K562 (cell line): ENCODE measurements at regions of chr3 and their contacts with region 1.

Region 1: DNA sequence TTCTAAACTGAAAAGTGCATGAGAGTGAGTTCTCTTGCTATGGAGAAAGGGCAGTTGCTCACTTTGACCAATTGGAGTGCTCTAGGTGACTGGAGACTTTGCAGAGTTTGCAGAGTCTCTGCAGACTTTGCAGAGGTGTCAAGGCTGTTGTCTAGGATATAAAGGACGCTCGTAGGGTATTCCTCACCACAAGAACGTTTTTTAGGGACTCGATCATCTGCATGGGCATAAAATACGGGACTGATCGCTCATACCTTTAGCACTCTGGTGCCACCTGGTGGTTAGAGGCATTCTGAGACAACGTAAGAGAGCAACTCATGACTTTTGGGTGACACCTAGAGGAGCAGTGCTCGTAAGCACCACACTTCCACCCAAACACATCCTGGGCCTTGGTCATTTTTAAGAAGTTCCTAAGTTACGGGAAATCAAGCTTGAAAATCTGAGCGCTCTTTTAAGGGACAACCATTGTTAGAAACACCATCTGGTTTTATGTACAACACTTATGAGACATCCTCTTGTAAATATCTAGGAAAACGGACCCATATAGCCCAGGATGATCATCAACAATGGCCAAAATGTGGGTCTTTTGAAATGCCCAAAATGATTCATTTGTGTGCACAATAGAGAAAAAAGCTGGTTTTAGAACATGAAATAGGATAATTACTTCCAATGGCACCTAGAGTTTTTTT is 51.6 kb upstream of the XCR1 start:
- DNase-seq: peak; percentile 86 to 94 (median 88)
- ATAC-seq: peak; percentile 100
- H3K4me3 ChIP-seq: no peak overlapping the region
- H3K27ac ChIP-seq: no peak overlapping the region
- H3K4me1 ChIP-seq: no peaks in the 10 kb centered on the region; a peak in 1 of 5 replicates
- H3K27me3 ChIP-seq: peaks cover 0 to 3% of the 10 kb centered on the region in 2 experiments; a peak in 2 of 5 replicates
- CTCF ChIP-seq: peak; percentile 100
- EP300 ChIP-seq: no peak
- POLR2A ChIP-seq: no peak
- RAD21 ChIP-seq: peak; percentile 100

Region 2: DNA sequence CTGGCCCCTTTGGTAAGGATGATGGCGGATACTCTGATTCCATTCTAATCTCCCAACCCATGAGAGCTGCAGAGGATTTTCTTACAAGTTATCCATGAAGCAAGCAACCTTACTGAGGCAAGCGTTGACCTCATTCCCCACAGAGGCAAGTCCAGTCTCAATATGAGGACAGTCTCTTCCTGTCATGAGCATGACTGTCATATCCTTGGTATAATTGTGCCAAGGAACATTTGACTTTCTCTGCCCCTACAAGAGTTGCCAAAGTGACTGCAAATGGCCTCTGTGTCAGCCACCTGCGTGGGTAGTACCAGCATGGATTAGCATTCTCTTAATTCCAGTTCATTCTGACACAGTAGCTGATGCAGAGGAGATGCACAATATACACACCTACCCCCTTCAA is 781.5 kb before region 1 on chr3:
- CTCF ChIA-PET with region 1: no interaction called
- POLR2A ChIA-PET with region 1: no interaction called
- in situ Hi-C with region 1: no loop called
- intact Hi-C with region 1: no loop called
- DNase-seq: no peak
- ATAC-seq: no peak
- H3K4me3 ChIP-seq: no peak overlapping the region
- H3K27ac ChIP-seq: no peak overlapping the region
- H3K4me1 ChIP-seq: no peaks in the 10 kb centered on the region
- H3K27me3 ChIP-seq: peaks cover 19 to 25% of the 10 kb centered on the region in 2 experiments
- CTCF ChIP-seq: no peak
- EP300 ChIP-seq: no peak
- POLR2A ChIP-seq: no peak
- RAD21 ChIP-seq: no peak

Region 3: DNA sequence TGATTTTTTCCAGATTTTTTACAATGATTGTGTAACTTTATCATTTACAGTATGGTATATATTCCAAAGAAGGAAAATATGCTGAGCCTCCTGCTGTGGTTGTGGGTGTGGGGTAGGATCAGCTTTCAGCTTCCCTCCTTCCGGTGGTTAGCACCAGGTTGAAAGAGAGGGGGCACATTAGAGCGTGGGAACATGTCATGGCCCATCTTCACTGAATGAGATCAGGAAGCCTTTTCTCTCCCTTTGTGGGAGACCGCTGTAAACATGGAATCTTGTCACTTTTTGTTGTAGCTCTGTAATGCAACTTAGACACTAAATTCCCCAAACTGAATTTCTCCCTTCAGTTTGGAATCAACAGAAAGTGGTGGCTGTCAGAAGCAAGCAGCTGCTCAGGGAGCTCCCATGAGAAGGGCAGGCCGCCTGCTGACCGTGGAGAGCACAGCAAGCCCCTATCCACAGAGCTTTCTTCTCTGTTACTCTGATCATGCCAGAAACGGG is 571.0 kb before region 1 on chr3:
- CTCF ChIA-PET with region 1: interaction called, 21 read pairs
- POLR2A ChIA-PET with region 1: no interaction called
- in situ Hi-C with region 1: loop called (anchors 10 kb)
- intact Hi-C with region 1: loop called (anchors 10 kb)
- DNase-seq: peak in 3 of 4 experiments; percentile 39 to 59 (median 55)
- ATAC-seq: peak; percentile 89
- H3K4me3 ChIP-seq: no peak overlapping the region
- H3K27ac ChIP-seq: no peak overlapping the region
- H3K4me1 ChIP-seq: 0 out of 5 replicates have a peak, but pooled peaks cover 0 to 6% of the 10 kb centered on the region in 2 experiments
- H3K27me3 ChIP-seq: no peaks in the 10 kb centered on the region
- CTCF ChIP-seq: peak; percentile 59 to 70 (median 62)
- EP300 ChIP-seq: no peak
- POLR2A ChIP-seq: no peak
- RAD21 ChIP-seq: peak; percentile 67 to 80

Region 4: DNA sequence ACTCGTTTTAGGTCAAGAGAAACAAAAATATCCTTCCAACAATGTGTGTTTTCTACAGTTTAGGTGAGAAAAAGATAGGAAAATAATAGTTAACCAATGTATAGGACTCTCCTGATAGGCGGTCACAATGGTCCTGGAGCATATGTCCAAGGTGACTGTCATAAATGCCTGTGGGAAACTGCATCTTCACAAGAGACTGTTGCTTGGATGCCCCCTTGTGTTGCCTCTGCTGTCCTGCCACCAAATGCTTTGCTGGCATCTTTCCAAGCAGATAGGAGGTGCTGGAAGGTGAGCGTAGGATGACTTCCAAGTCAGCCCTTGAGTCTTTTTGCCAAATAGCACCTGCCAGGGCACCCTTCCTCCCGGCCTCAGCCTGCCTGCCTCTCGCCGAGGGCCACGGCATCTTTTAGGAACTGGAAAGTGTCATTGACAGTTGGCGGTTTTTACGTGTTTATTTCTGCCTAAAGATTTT is 413.7 kb before region 1 on chr3:
- CTCF ChIA-PET with region 1: no interaction called
- POLR2A ChIA-PET with region 1: no interaction called
- in situ Hi-C with region 1: no loop called
- intact Hi-C with region 1: loop called (anchors 5 kb)
- DNase-seq: peak; percentile 78 to 92 (median 82)
- ATAC-seq: peak; percentile 88
- H3K4me3 ChIP-seq: no peak overlapping the region
- H3K27ac ChIP-seq: no peak overlapping the region; the same call in 2 of the 3 replicates
- H3K4me1 ChIP-seq: peaks cover 6 to 35% of the 10 kb centered on the region in 2 experiments; a peak in 4 of 5 replicates
- H3K27me3 ChIP-seq: no peaks in the 10 kb centered on the region
- CTCF ChIP-seq: peak; percentile 95 to 99 (median 99)
- EP300 ChIP-seq: no peak
- POLR2A ChIP-seq: no peak
- RAD21 ChIP-seq: peak; percentile 51 to 82

Region 5: DNA sequence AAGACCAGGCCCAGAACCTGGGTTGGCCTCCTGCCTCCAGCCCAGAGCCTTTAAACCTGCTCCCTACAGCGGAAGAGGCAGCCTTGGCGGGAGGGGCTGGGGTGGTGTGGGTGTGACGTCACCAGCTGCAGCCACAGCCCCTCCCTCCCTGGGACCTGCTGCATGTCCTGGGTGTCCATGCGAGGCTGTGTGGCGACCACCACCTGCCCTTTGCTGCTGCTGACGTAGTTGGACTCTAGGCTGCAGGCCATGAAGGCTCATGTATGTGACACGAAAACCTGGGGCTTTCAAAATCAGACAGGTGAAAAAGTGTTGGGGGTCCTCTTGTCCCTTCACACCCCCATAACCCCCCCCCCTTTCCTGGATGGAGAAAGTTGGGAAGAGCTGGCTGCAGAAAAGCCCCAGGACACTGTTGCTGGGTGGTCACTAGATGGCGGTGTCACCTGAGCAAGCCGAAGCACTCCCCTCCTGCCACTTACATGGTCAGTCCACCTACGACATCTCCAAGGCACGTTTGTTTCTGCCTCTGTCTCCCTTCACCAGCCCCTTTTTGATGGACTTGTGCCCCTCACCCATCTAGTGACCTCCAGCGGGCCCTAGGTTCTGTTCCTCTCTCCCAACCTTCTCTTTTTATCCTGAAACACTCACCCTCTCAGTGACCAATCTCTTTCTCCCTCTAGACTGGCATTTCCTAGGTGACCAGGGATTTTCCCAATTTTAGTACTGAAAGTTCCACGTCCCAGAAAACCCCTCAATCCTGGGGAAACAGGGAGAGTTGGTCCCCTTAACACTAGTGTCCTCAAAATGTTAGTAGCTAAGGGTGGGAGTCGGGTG is 317.8 kb before region 1 on chr3:
- CTCF ChIA-PET with region 1: interaction called, 25 read pairs
- POLR2A ChIA-PET with region 1: interaction called, 3 read pairs
- in situ Hi-C with region 1: loop called (anchors 10 kb)
- intact Hi-C with region 1: loop called (anchors 2 kb)
- DNase-seq: peak; percentile 71 to 87 (median 86)
- ATAC-seq: peak; percentile 94
- H3K4me3 ChIP-seq: no peak overlapping the region
- H3K27ac ChIP-seq: no peak overlapping the region
- H3K4me1 ChIP-seq: peaks cover 0 to 8% of the 10 kb centered on the region in 2 experiments; a peak in 3 of 5 replicates
- H3K27me3 ChIP-seq: peaks cover 30 to 77% of the 10 kb centered on the region in 2 experiments
- CTCF ChIP-seq: peak; percentile 93
- EP300 ChIP-seq: no peak
- POLR2A ChIP-seq: no peak
- RAD21 ChIP-seq: peak; percentile 81 to 93

Region 6: GRCh38 chr3:45995236-45996192 is 83.3 kb before region 1 on chr3 and contains the start of gene FYCO1:
- CTCF ChIA-PET with region 1: no interaction called
- POLR2A ChIA-PET with region 1: no interaction called
- in situ Hi-C with region 1: no loop called
- intact Hi-C with region 1: no loop called
- DNase-seq: peak; percentile 95 to 98 (median 98)
- ATAC-seq: peak; percentile 99
- H3K4me3 ChIP-seq: peak within 1 kb of the TSS; percentile 95
- H3K27ac ChIP-seq: peak within 1 kb of the TSS; percentile 80
- H3K4me1 ChIP-seq: peaks cover 18 to 24% of the 10 kb centered on the region in 2 experiments
- H3K27me3 ChIP-seq: peaks cover 2 to 18% of the 10 kb centered on the region in 2 experiments; a peak in 2 of 5 replicates
- CTCF ChIP-seq: no peak
- EP300 ChIP-seq: no peak
- POLR2A ChIP-seq: peak; percentile 88
- RAD21 ChIP-seq: no peak
- polyA plus RNA-seq, gene FYCO1: 2.1 to 3.0 TPM

Region 7: GRCh38 chr3:46006238-46007032 is 72.4 kb before region 1 on chr3:
- CTCF ChIA-PET with region 1: no interaction called
- POLR2A ChIA-PET with region 1: no interaction called
- in situ Hi-C with region 1: no loop called
- intact Hi-C with region 1: loop called (anchors 5 kb)
- DNase-seq: no peak
- ATAC-seq: no peak
- H3K4me3 ChIP-seq: no peak overlapping the region
- H3K27ac ChIP-seq: no peak overlapping the region
- H3K4me1 ChIP-seq: peaks cover 0 to 5% of the 10 kb centered on the region in 2 experiments; a peak in 2 of 5 replicates
- H3K27me3 ChIP-seq: peaks cover 12 to 32% of the 10 kb centered on the region in 2 experiments
- CTCF ChIP-seq: no peak
- EP300 ChIP-seq: no peak
- POLR2A ChIP-seq: no peak
- RAD21 ChIP-seq: no peak

Region 8: DNA sequence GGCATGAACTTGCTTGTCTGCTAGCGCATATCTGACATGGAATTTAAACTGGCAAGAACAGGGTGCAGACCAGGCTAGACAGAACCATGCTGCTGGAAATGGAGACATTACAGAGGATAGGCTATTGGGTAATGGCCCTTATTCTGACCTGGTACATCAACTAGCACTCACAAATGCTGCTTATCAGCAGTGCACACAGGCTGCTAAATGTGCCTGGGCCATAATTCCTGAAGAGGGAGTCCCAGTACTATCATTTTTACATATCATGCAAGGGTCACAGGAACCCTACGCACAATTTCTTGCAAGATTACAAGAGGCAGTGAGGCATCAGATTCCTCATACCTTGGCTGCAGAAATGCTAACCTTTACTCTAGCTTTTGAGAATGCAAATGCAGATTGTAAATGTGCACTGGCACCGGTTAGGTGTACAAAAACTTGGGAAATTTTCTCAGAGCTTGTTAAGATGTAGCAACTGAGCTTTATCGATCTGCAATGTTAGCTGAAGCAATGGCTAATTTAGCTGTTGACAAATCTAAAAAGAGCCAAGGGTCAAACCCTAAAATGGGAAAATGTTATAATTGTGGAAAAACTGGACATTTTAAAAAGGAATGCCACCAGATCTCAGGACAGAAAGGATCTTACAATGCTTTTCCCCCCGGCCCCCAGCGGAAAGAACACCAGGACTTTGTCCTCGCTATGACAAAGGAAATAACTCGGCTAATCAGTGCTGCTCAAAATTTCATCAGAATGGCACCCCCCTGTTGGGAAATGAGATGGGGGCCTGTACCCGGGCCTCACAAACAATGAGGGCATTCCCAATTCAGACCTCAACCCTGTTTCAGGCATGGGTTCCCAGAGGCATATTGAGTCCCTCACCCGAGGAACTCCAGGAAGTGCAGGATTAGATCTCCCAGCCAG is 349.3 kb after region 1 on chr3:
- CTCF ChIA-PET with region 1: no interaction called
- POLR2A ChIA-PET with region 1: no interaction called
- in situ Hi-C with region 1: no loop called
- intact Hi-C with region 1: loop called (anchors 5 kb)
- DNase-seq: peak in 2 of 4 experiments; percentile 57 to 78
- ATAC-seq: peak; percentile 96
- H3K4me3 ChIP-seq: no peak overlapping the region
- H3K27ac ChIP-seq: no peak overlapping the region
- H3K4me1 ChIP-seq: peaks cover 3 to 16% of the 10 kb centered on the region in 2 experiments; a peak in 4 of 5 replicates
- H3K27me3 ChIP-seq: peaks cover 0 to 4% of the 10 kb centered on the region in 2 experiments; a peak in 2 of 5 replicates
- CTCF ChIP-seq: peak; percentile 39 to 72 (median 51)
- EP300 ChIP-seq: no peak; the same call in 1 of the 2 replicates
- POLR2A ChIP-seq: no peak
- RAD21 ChIP-seq: peak; percentile 74 to 88